ENCODE measurements at regions of chr6 and their contacts with region 1.

Region 1: DNA sequence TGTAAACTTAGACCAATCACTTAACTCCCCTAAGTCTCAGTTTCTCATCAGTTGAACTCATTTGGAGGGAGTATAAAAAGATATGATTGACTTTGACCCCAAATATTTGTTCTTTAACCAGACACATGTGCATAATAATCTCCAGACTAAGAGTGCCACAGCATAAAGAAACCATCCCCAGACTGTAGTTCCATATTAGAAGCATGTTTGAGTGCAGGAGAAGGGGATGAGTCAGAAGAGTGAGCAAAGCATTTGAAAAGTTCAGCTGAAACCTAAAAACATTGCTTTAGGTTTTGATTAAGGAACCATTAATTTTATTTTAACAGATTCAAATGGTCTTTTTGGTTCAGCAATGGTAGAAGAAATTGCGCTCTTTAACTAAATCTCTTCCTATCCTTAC is 654.8 kb downstream of the UTRN start:
- DNase-seq: no peak
- H3K4me3 ChIP-seq: no peak overlapping the region
- H3K27ac ChIP-seq: no peak overlapping the region
- H3K4me1 ChIP-seq: no peaks in the 10 kb centered on the region
- H3K27me3 ChIP-seq: no peaks in the 10 kb centered on the region
- CTCF ChIP-seq: no peak

Region 2: DNA sequence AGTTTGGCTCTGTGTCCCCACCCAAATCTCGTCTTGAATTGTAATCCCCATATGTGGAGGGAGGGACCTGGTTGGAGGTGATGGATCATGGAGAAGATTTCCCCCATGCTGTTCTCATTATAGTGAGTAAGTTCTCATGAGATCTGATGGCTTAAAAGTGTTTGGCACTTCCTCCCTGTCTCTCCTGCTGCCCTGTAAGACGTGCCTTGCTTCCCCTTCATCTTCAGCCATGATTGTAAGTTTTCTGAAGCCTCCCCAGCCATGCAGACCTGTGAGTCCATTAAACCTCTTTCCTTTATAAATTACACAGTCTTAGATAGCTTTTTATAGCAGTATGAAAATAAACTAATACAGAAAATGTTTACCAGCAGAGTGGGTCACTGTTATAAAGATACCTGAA is 77.2 kb before region 1 on chr6:
- dilution Hi-C with region 1: loop called (anchors 5 kb)
- DNase-seq: no peak
- H3K4me3 ChIP-seq: no peak overlapping the region
- H3K27ac ChIP-seq: no peak overlapping the region
- H3K4me1 ChIP-seq: no peaks in the 10 kb centered on the region
- H3K27me3 ChIP-seq: no peaks in the 10 kb centered on the region
- CTCF ChIP-seq: no peak

Region 3: DNA sequence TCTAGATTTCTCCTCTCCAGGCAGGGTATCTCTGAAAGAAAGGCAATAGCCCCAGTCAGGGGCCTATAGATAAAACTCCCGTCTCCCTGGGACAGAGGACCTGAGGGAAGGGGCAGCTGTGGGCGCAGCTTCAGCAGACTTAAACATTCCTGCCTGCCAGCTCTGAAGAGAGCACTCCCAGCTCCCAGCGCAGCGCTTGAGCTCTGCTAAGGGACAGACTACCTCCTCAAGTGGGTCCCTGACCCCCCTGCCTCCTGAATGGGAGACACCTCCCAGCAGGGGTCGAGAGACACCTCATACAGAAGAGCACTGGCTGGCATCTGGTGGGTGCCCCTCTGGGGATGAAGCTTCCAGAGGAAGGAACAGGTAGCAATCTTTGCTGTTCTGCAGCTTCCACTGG is 238.5 kb after region 1 on chr6:
- dilution Hi-C with region 1: no loop called
- DNase-seq: no peak
- H3K4me3 ChIP-seq: no peak overlapping the region
- H3K27ac ChIP-seq: no peak overlapping the region
- H3K4me1 ChIP-seq: no peaks in the 10 kb centered on the region
- H3K27me3 ChIP-seq: no peaks in the 10 kb centered on the region
- CTCF ChIP-seq: no peak

Region 4: DNA sequence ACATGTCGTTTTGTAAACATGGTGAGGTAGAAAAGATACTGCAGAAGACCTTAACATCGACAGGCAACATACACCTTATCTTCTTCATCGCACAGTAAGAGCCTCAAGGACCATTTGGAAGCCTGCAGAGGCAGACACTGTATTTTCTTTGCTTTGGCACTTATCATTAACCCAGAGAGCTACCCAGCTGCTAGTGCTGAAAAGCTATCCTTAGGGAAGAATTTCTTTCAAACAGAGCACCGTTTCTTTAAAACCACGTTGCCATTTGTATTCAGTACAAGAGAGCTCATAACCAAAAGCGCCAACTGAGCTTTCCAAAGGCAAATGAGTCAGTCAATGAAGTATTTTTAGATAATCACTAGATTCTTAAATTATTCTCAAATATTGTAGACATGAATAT is 488.8 kb after region 1 on chr6:
- dilution Hi-C with region 1: no loop called
- DNase-seq: no peak
- H3K4me3 ChIP-seq: no peak overlapping the region
- H3K27ac ChIP-seq: no peak overlapping the region
- H3K4me1 ChIP-seq: no peaks in the 10 kb centered on the region
- H3K27me3 ChIP-seq: no peaks in the 10 kb centered on the region
- CTCF ChIP-seq: no peak